H1 (cell line): ENCODE measurements at regions of chr16 and their contacts with region 1.

Region 1: GRCh38 chr16:69330286-69331109 is at the start of gene PDF:
- DNase-seq: peak; percentile 84 to 93
- H3K4me3 ChIP-seq: peak within 1 kb of the TSS; percentile 49 to 93 (median 86)
- H3K27ac ChIP-seq: peak within 1 kb of the TSS; percentile 95
- H3K4me1 ChIP-seq: peaks cover 6 to 19% (median 12%) of the 10 kb centered on the region in 4 experiments
- H3K27me3 ChIP-seq: no peaks in the 10 kb centered on the region
- CTCF ChIP-seq: no peak
- EP300 ChIP-seq: no peak
- POLR2A ChIP-seq: peak; percentile 79 to 92
- RAD21 ChIP-seq: no peak
- total RNA-seq, gene PDF: 23.6 and 23.9 TPM in 2 replicates

Region 2: GRCh38 chr16:69132424-69133252 is 197.9 kb before region 1 on chr16 and contains the starts of genes CHTF8 and UTP4:
- CTCF ChIA-PET with region 1: interaction called, 3 read pairs
- POLR2A ChIA-PET with region 1: interaction called, 12 read pairs
- DNase-seq: no peak
- H3K4me3 ChIP-seq: peak within 1 kb of the TSS; percentile 90 to 97 (median 94)
- H3K27ac ChIP-seq: peak within 1 kb of the TSS; percentile 94
- H3K4me1 ChIP-seq: peaks cover 2 to 12% (median 7%) of the 10 kb centered on the region in 4 experiments; a peak in 5 of 7 replicates
- H3K27me3 ChIP-seq: no peaks in the 10 kb centered on the region
- CTCF ChIP-seq: no peak
- EP300 ChIP-seq: no peak; a peak in 1 of 3 replicates
- POLR2A ChIP-seq: peak; percentile 76 to 83
- RAD21 ChIP-seq: no peak
- total RNA-seq, gene CHTF8: 138 and 146 TPM in 2 replicates
- total RNA-seq, gene UTP4: 101 TPM in 2 replicates

Region 3: DNA sequence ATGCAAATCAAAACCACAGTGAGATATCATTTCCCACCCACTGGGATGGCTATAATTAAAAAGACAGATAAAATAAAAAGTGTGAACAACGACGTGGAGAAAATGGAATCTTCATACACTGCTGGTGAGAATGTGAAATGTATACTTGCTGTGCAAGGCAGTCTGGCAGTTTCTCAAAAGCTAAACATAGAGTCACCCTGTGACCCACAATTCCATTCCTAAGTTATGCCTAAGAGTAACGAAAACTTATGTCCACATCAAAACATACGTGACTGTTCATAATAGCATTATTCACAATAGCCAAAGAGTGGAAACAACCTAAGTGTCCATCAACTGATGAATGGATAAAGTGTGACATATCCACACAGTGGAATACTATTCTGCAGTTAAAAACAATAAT is 57.5 kb before region 1 on chr16:
- CTCF ChIA-PET with region 1: no interaction called
- POLR2A ChIA-PET with region 1: no interaction called
- DNase-seq: no peak
- H3K4me3 ChIP-seq: no peak overlapping the region
- H3K27ac ChIP-seq: no peak overlapping the region
- H3K4me1 ChIP-seq: no peaks in the 10 kb centered on the region
- H3K27me3 ChIP-seq: no peaks in the 10 kb centered on the region
- CTCF ChIP-seq: no peak
- EP300 ChIP-seq: no peak
- POLR2A ChIP-seq: no peak
- RAD21 ChIP-seq: no peak

Region 4: GRCh38 chr16:69412316-69412715 is 81.8 kb after region 1 on chr16:
- CTCF ChIA-PET with region 1: no interaction called
- POLR2A ChIA-PET with region 1: no interaction called
- DNase-seq: no peak
- H3K4me3 ChIP-seq: no peak overlapping the region
- H3K27ac ChIP-seq: no peak overlapping the region
- H3K4me1 ChIP-seq: no peaks in the 10 kb centered on the region
- H3K27me3 ChIP-seq: no peaks in the 10 kb centered on the region
- CTCF ChIP-seq: no peak
- EP300 ChIP-seq: no peak
- POLR2A ChIP-seq: no peak
- RAD21 ChIP-seq: no peak